Gastrocnemius medialis (tissue), 4 donors: ENCODE measurements at regions of chr2 and their contacts with region 1.

Region 1: DNA sequence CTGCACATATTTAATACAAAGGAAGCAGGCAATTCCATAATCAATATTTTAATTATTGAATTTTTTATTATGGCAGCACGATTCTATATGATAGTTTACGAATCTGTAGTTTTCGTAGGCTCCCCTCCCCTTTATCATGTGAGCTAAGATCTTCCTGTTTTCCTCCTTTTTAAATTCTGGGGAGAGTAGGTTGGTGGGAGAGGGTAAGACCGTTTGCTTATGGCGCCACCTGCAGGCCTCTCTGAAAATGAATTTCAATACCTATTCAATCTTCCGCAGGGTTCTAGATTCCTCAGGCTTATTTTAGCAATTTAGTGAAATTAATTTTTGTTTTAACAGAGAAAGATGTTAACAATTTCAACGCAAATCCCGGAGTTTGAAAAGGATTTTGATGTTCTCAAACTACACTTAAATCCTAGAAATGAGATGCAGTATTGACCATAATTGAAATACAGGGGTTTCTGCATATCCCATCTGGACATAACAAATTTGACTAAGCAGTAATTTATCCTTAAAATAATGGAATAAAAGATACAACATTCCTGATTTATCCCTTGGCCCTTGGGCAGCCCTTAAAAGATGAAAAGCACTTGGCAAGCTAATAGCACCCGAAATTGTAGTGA is 12.8 kb upstream of the GBX2 start:
- DNase-seq: no peak
- ATAC-seq: peak in 1 of 2 donors; percentile 31
- H3K4me3 ChIP-seq: no peak overlapping the region
- H3K27ac ChIP-seq: no peak overlapping the region
- H3K4me1 ChIP-seq: peaks cover 13 to 15% of the 10 kb centered on the region in 2 donors
- H3K27me3 ChIP-seq: peaks cover 59 to 62% (median 59%) of the 10 kb centered on the region in 3 donors
- CTCF ChIP-seq: peak; percentile 28 to 68 (median 55)
- POLR2A ChIP-seq: no peak

Region 2: GRCh38 chr2:235766278-235766677 is 414.7 kb before region 1 on chr2:
- in situ Hi-C with region 1: loop called (anchors 5 to 10 kb)
- intact Hi-C with region 1: loop called (anchors 2 kb)
- DNase-seq: peak; percentile 33 to 45
- ATAC-seq: peak; percentile 81 to 95
- H3K4me3 ChIP-seq: no peak overlapping the region
- H3K27ac ChIP-seq: no peak overlapping the region
- H3K4me1 ChIP-seq: no peaks in the 10 kb centered on the region
- H3K27me3 ChIP-seq: no peaks in the 10 kb centered on the region
- CTCF ChIP-seq: peak; percentile 77 to 92 (median 85)
- POLR2A ChIP-seq: no peak

Region 3: DNA sequence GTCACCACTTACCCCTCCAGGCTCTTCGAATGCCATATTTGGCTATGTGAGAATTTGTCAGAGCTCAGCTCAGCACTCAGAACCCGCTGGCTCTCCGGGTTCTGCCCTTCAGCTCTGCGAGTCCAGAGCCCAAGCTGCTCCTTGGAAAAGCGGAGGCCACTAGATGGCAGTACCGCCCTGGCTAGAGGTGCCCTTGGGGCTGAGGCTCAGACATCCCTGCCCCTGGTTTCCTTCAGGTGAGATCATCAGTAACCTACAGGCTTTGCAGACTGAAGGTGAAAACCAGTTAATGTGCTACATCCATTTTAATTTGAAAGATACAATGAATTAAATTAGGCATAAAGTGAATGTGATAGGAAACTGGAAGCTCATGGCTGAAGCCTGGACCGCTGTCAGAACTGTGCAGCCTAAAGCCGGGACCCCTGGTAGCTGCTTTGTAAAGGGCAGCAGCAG is 401.5 kb before region 1 on chr2:
- in situ Hi-C with region 1: loop called in 2 of 4 experiments (anchors 10 kb)
- intact Hi-C with region 1: no loop called
- DNase-seq: peak; percentile 17 to 45
- ATAC-seq: peak; percentile 47 to 66
- H3K4me3 ChIP-seq: no peak overlapping the region
- H3K27ac ChIP-seq: no peak overlapping the region
- H3K4me1 ChIP-seq: no peaks in the 10 kb centered on the region
- H3K27me3 ChIP-seq: no peaks in the 10 kb centered on the region
- CTCF ChIP-seq: peak; percentile 40 to 76 (median 62)
- POLR2A ChIP-seq: no peak

Region 4: GRCh38 chr2:236133410-236134012 is 47.4 kb before region 1 on chr2:
- in situ Hi-C with region 1: no loop called
- intact Hi-C with region 1: no loop called
- DNase-seq: no peak
- ATAC-seq: no peak
- H3K4me3 ChIP-seq: no peak overlapping the region
- H3K27ac ChIP-seq: no peak overlapping the region
- H3K4me1 ChIP-seq: no peaks in the 10 kb centered on the region
- H3K27me3 ChIP-seq: no peaks in the 10 kb centered on the region
- CTCF ChIP-seq: no peak
- POLR2A ChIP-seq: no peak